Activated naive CD4-positive, alpha-beta T cell treated with anti-CD3 and anti-CD28 coated beads for 36 hours (primary cell): ENCODE measurements at regions of chr1 and their contacts with region 1.

Region 1: GRCh38 chr1:92476071-92476631 is 10.6 kb downstream of the GFI1 start:
- DNase-seq: peak; percentile 94
- H3K4me3 Mint-ChIP-seq: peak overlapping the region; percentile 53
- H3K27ac Mint-ChIP-seq: peak overlapping the region; percentile 87
- H3K4me1 Mint-ChIP-seq: peaks cover 85% of the 10 kb centered on the region
- H3K27me3 Mint-ChIP-seq: no peaks in the 10 kb centered on the region

Region 2: GRCh38 chr1:91876040-91876470 is 600.1 kb before region 1 on chr1:
- CTCF ChIA-PET with region 1: no interaction called
- intact Hi-C with region 1: loop called (anchors 5 kb)
- DNase-seq: peak; percentile 61
- H3K4me3 Mint-ChIP-seq: no peak overlapping the region
- H3K27ac Mint-ChIP-seq: peak overlapping the region; percentile 5
- H3K4me1 Mint-ChIP-seq: peaks cover 74% of the 10 kb centered on the region
- H3K27me3 Mint-ChIP-seq: no peaks in the 10 kb centered on the region

Region 3: DNA sequence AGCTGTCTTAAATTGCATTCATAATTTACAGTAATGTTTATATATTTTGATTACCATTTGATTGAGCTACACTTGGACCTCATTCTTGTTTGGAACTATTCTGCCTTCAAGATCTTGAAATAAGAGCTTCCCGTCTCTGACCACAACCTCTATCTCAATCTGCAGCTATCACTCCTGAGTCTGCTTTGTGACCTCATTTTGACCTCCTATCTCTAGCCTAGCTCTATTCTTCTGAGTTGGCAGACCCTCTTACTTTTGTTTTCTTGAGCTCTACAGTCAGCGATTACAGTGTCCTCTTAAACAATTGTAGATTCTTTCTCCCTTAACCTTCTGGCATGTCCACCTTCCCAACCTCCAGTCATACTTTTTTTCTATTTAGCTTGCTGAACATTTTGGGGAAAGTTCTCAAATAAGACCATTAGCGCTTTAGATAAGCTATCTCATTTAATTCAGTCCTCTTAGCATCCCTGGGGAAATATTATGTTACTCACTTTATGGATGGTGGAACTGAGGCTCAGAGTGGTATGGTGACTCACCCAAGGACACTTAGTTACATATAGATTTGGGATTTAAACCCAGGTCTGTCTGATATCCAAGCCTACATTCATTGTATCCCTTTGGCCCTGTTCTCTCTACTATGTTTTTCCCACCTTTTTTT is 158.2 kb before region 1 on chr1:
- CTCF ChIA-PET with region 1: no interaction called
- intact Hi-C with region 1: loop called (anchors 2 kb)
- DNase-seq: no peak
- H3K4me3 Mint-ChIP-seq: no peak overlapping the region
- H3K27ac Mint-ChIP-seq: no peak overlapping the region
- H3K4me1 Mint-ChIP-seq: peaks cover 55% of the 10 kb centered on the region
- H3K27me3 Mint-ChIP-seq: no peaks in the 10 kb centered on the region

Region 4: DNA sequence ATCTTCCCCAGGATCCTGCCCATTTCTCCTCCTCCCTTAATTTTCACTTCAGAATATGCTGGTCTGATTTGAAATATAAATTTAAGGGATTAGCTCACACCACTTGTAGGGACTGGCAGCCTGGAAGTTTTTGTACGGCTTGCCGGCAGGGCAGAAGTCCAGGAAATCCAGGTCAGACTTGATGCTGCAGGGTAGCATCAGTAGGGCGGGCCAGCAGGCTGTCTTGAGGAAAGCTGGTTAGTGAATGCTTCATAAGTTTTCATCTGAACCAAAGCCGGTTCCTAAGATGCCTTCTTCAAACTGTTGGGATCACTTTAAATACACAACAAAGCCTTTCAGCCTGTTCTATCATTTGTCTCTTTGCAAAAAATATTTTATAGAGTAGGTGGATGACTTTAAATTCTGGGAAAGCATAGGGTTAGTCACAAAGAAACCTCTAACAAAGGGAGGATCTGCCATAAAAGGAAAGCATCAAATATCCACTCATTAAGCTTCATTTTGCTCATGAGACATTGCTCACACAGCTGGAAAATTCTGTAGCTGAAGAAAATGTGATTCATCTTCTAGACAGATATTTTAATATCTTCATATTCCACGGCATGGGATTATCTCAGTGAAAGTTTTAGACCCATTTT is 101.2 kb after region 1 on chr1:
- CTCF ChIA-PET with region 1: interaction called, 5 read pairs
- intact Hi-C with region 1: loop called (anchors 1 kb)
- DNase-seq: no peak
- H3K4me3 Mint-ChIP-seq: peak overlapping the region; percentile 92
- H3K27ac Mint-ChIP-seq: peak overlapping the region; percentile 97
- H3K4me1 Mint-ChIP-seq: peaks cover 62% of the 10 kb centered on the region
- H3K27me3 Mint-ChIP-seq: no peaks in the 10 kb centered on the region

Region 5: DNA sequence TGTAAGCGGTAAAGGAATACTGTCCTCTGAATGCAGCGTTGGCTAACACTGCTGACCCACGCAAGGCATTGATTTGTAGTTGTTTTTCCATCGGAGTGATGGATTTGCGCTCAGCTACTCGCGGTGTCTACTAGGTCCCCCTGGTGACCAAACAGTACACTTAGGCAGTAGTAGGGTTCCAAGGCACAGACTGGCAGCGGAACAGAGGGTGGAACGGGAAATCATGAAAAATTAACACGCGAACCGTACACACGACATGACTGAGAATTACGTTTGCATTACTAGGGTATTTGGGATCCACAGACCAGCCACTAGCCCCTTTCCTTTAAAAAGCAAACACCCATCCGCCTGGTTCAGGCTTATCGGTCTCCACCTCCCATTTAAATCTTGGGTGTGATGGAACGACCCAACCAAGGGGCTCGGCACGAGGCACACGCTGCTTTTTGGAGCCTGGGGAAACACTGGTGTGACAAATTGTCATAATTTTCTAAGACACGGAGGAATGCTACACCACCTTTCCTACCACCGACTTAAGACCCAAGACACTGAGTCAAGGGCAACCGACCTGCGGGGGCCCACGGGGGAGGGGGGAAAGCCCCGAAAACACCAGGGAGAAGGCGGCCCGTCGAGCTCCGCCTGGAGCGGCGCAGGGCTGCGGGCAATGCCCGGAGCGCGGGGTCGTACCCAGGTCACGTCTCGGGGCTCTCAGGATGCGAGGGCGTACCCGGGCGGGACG is 484.4 kb after region 1 on chr1:
- CTCF ChIA-PET with region 1: no interaction called
- intact Hi-C with region 1: loop called (anchors 5 kb)
- DNase-seq: peak; percentile 76
- H3K4me3 Mint-ChIP-seq: peak overlapping the region; percentile 89
- H3K27ac Mint-ChIP-seq: peak overlapping the region; percentile 94
- H3K4me1 Mint-ChIP-seq: peaks cover 41% of the 10 kb centered on the region
- H3K27me3 Mint-ChIP-seq: no peaks in the 10 kb centered on the region